ENCODE measurements at regions of chr6 and their contacts with region 1.

Region 1: GRCh38 chr6:134063966-134064445 is 11.6 kb upstream of the SLC2A12 start:
- DNase-seq: no peak
- H3K4me3 ChIP-seq: no peak overlapping the region
- H3K27ac ChIP-seq: no peak overlapping the region
- H3K4me1 ChIP-seq: peaks cover 5 to 23% (median 5%) of the 10 kb centered on the region in 3 donors
- H3K27me3 ChIP-seq: no peaks in the 10 kb centered on the region
- CTCF ChIP-seq: peak; percentile 66 to 85 (median 78)
- POLR2A ChIP-seq: no peak

Region 2: GRCh38 chr6:133923938-133924593 is 139.9 kb before region 1 on chr6:
- intact Hi-C with region 1: loop called (anchors 10 kb)
- DNase-seq: no peak
- H3K4me3 ChIP-seq: no peak overlapping the region
- H3K27ac ChIP-seq: no peak overlapping the region
- H3K4me1 ChIP-seq: peaks cover 0 to 8% (median 0%) of the 10 kb centered on the region in 3 donors
- H3K27me3 ChIP-seq: peaks cover 0 to 18% (median 0%) of the 10 kb centered on the region in 4 donors
- CTCF ChIP-seq: peak; percentile 70 to 91 (median 82)
- POLR2A ChIP-seq: no peak

Region 3: GRCh38 chr6:133977983-133978895 is 85.8 kb before region 1 on chr6:
- intact Hi-C with region 1: loop called (anchors 5 kb)
- DNase-seq: no peak
- H3K4me3 ChIP-seq: no peak overlapping the region
- H3K27ac ChIP-seq: no peak overlapping the region
- H3K4me1 ChIP-seq: peaks cover 0 to 19% (median 9%) of the 10 kb centered on the region in 3 donors
- H3K27me3 ChIP-seq: no peaks in the 10 kb centered on the region
- CTCF ChIP-seq: no peak
- POLR2A ChIP-seq: no peak

Region 4: GRCh38 chr6:134707342-134708031 is 643.5 kb after region 1 on chr6:
- intact Hi-C with region 1: no loop called
- DNase-seq: no peak
- H3K4me3 ChIP-seq: no peak overlapping the region
- H3K27ac ChIP-seq: no peak overlapping the region
- H3K4me1 ChIP-seq: peaks cover 0 to 10% (median 0%) of the 10 kb centered on the region in 3 donors
- H3K27me3 ChIP-seq: peaks cover 0 to 9% (median 0%) of the 10 kb centered on the region in 4 donors
- CTCF ChIP-seq: no peak
- POLR2A ChIP-seq: no peak

Measured in esophagus squamous epithelium (tissue), 5 donors.